PC-9 (cell line): ENCODE measurements at regions of chr1 and their contacts with region 1.

Region 1: DNA sequence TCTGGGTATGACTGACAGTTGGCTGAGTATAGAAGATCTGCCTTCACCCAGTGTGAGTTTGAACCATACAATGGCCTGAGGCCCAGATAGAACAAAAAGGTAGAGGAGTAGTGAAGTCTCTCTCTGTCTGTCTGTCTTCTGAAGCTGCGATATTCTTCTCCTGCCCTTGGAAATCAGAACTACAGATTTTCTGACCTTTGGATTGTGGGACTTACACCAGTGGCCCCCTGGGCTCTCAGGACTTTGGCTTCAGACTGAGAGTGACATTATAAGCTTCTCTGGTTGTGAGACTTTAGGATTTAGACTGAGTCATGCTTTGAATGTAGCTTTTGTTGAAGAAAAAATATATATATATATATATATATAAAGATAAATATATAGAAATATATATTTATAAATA is 1235.0 kb upstream of the ADGRL4 start:
- DNase-seq: no peak
- H3K4me3 ChIP-seq: no peak overlapping the region
- H3K27ac ChIP-seq: no peak overlapping the region
- H3K4me1 ChIP-seq: no peaks in the 10 kb centered on the region
- H3K27me3 ChIP-seq: no peaks in the 10 kb centered on the region
- CTCF ChIP-seq: no peak

Region 2: DNA sequence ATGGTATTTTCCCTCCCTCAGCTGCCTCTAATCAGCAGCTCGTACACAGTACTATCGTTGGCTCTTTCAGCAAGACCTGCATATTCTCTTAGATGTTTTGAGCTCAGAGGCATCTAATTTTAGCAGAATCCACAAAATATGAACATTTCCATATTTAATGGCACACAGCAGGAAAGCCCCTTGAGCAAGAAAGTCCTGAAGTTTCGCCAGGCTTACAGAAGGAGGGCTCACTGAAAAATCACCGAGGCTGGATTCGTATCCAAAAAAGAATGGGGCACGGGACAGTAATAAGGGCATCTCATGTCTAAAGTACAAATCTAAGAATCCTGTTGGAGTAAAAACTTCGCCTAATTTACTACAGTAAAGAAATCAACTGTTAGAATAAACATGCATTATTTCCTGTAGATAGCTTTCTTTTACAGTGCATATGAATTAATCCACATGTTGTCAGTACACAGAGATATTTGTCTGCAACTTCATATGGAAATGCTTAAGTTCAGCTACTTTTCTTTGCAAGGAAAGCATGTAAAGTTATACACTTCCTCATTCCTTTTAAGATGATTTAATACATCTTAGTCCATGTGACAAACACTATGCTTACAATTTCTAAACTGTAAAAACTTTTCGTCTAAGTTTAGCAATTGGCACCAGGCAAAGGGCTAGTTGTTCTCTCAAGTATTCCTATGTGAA is 29.7 kb before region 1 on chr1:
- CTCF ChIA-PET with region 1: interaction called, 15 read pairs
- POLR2A ChIA-PET with region 1: no interaction called
- intact Hi-C with region 1: no loop called
- DNase-seq: no peak
- H3K4me3 ChIP-seq: no peak overlapping the region
- H3K27ac ChIP-seq: no peak overlapping the region
- H3K4me1 ChIP-seq: no peaks in the 10 kb centered on the region
- H3K27me3 ChIP-seq: no peaks in the 10 kb centered on the region
- CTCF ChIP-seq: no peak